A673 (cell line): ENCODE measurements at regions of chr5 and their contacts with region 1.

Region 1: GRCh38 chr5:31412324-31412723 is 119.6 kb downstream of the DROSHA start:
- DNase-seq: peak; percentile 84
- H3K4me3 ChIP-seq: no peak overlapping the region
- H3K27ac ChIP-seq: peak overlapping the region; percentile 48
- H3K4me1 ChIP-seq: peaks cover 75% of the 10 kb centered on the region
- H3K27me3 ChIP-seq: no peaks in the 10 kb centered on the region
- CTCF ChIP-seq: no peak

Region 2: DNA sequence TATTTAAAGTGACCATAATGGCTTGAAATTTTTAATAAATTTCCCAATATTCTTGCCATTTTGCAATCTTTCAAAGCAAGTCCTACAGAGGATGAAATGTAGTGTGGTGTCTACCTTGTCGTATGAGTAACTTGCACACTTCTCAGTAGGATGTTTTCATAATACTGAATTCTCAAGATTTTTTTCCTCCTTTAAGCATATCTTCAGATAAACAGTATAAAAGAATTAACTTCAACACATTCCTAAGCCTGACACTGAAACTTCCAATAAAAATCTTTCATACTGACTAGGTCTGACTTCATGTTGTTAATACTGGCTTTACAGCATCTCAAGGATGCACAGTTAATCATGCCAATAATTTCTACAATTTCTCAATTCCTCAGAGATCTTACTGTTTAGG is 57.6 kb after region 1 on chr5:
- CTCF ChIA-PET with region 1: no interaction called
- POLR2A ChIA-PET with region 1: no interaction called
- intact Hi-C with region 1: loop called (anchors 5 kb)
- DNase-seq: peak; percentile 69
- H3K4me3 ChIP-seq: no peak overlapping the region
- H3K27ac ChIP-seq: peak overlapping the region; percentile 67
- H3K4me1 ChIP-seq: peaks cover 36% of the 10 kb centered on the region
- H3K27me3 ChIP-seq: no peaks in the 10 kb centered on the region
- CTCF ChIP-seq: no peak